Activated naive CD4-positive, alpha-beta T cell treated with anti-CD3 and anti-CD28 coated beads, Interleukin-2, amount 10 ng/mL, durations not matched to agents 7 days and 5 days (primary cell): ENCODE measurements at regions of chr2 and their contacts with region 1.

Region 1: DNA sequence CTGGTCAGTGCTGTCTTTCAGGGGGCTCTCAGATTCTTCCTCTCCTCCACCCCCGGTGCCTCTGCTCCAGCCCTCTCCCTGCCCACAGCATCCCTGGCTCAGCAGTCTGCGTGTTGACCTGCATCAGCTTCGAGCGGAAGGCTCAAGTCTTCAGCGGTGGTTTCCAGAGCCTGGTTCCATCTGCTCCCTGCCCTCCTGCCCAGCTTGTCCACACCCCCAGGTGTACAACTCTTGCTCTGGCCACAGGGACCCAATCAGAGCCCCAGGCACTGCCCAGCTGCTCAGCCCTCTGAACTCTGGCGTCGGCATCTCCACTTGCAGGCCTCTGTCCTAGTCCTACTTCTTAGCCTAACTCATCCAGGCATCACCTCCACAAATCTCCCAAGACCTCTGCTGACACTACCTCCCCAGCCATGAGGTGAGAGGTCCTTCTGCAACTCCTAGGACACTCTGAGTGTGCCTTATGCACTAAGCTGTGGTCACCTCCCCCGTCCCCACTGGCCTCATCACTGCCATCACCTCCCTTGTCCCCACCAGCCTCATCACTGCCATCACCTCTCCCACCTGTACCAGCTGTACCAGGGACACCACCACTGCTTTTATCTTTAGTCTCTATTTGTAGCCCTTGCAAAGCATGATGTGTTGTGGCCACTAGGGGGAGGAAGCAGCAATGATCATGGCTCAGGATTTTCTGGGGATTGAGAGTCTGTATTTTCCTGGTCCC is 60.9 kb downstream of the EDAR start:
- DNase-seq: peak; percentile 60
- H3K4me3 Mint-ChIP-seq: no peak overlapping the region
- H3K27ac Mint-ChIP-seq: no peak overlapping the region
- H3K4me1 Mint-ChIP-seq: peaks cover 3% of the 10 kb centered on the region
- H3K27me3 Mint-ChIP-seq: peaks cover 1% of the 10 kb centered on the region

Region 2: DNA sequence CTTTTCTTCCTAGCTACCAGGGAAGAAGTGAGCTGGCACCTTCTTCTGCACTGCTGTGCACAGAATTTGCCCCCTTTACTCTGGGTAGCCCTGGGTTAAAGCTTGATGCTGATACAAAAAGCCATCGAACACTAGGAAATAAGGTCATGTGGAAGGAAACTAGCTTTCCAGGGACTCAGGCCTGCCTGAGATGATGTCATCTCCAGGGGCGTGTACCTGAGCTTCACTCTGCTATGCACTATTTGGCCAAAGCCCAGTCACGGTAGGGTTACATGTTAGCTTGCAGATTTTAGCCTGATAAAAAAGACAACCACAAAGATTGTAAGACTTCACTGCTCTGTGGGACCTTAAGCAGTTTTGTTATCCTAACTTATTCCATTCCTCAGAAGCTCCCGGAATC is 40.5 kb after region 1 on chr2:
- CTCF ChIA-PET with region 1: interaction called, 10 read pairs
- DNase-seq: peak; percentile 33
- H3K4me3 Mint-ChIP-seq: no peak overlapping the region
- H3K27ac Mint-ChIP-seq: no peak overlapping the region
- H3K4me1 Mint-ChIP-seq: peaks cover 73% of the 10 kb centered on the region
- H3K27me3 Mint-ChIP-seq: peaks cover 4% of the 10 kb centered on the region

Region 3: DNA sequence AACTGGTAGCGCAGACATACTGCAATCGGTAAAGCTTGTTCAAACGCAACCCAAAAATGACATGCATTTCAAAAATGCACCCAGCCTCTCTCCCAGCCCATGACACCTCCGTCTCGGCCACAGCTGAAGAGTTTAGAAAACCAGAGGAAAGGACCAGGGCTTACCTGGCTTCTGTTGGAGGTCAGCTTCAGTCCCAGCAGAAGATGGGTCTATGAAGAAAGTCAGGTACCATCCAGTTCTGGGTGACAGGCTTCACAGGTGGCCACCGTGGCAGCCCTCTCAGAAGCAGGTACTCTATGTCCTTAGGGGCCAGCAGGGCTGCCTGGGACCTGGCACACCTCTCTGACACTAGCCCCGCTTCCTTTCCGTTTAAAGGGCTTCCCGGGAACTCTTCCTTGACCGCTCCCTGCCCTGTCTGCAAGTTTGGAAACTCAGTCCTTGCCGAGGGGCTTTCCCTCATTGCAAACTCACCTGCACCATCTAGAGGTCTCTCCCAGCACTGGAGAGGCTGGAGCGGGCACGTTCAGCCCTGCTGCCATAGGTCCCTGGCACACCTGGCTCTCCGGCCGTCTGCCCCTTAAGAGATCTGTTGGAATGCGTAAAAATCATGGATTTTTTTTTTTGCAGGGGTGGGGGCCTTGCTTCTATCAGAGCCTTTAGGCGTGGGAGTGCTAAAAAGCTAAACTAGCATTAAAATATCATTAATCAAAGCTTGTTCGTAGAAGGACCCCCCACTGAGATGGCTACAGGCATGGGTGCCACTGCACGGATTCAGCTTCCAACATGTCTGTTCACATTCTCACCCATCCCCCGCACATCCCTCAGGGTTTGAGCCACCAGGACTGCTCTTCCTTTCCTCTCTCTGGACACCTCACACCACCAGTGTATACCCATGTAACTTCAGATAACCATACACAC is 61.0 kb after region 1 on chr2 and contains the start of gene EDAR:
- CTCF ChIA-PET with region 1: interaction called, 37 read pairs
- DNase-seq: peak; percentile 69
- H3K4me3 Mint-ChIP-seq: peak within 1 kb of the TSS; percentile 65
- H3K27ac Mint-ChIP-seq: no peak within 1 kb of the TSS
- H3K4me1 Mint-ChIP-seq: peaks cover 43% of the 10 kb centered on the region
- H3K27me3 Mint-ChIP-seq: peaks cover 30% of the 10 kb centered on the region

Region 4: GRCh38 chr2:109079590-109079989 is 151.5 kb after region 1 on chr2:
- CTCF ChIA-PET with region 1: no interaction called
- DNase-seq: no peak
- H3K4me3 Mint-ChIP-seq: no peak overlapping the region
- H3K27ac Mint-ChIP-seq: no peak overlapping the region
- H3K4me1 Mint-ChIP-seq: peaks cover 2% of the 10 kb centered on the region
- H3K27me3 Mint-ChIP-seq: peaks cover 27% of the 10 kb centered on the region

Region 5: GRCh38 chr2:109218087-109218791 is 290.1 kb after region 1 on chr2:
- CTCF ChIA-PET with region 1: no interaction called
- DNase-seq: peak; percentile 16
- H3K4me3 Mint-ChIP-seq: peak overlapping the region; percentile 19
- H3K27ac Mint-ChIP-seq: peak overlapping the region; percentile 78
- H3K4me1 Mint-ChIP-seq: peaks cover 60% of the 10 kb centered on the region
- H3K27me3 Mint-ChIP-seq: peaks cover 68% of the 10 kb centered on the region